Astrocyte of the cerebellum (primary cell): ENCODE measurements at regions of chr2 and their contacts with region 1.

Region 1: DNA sequence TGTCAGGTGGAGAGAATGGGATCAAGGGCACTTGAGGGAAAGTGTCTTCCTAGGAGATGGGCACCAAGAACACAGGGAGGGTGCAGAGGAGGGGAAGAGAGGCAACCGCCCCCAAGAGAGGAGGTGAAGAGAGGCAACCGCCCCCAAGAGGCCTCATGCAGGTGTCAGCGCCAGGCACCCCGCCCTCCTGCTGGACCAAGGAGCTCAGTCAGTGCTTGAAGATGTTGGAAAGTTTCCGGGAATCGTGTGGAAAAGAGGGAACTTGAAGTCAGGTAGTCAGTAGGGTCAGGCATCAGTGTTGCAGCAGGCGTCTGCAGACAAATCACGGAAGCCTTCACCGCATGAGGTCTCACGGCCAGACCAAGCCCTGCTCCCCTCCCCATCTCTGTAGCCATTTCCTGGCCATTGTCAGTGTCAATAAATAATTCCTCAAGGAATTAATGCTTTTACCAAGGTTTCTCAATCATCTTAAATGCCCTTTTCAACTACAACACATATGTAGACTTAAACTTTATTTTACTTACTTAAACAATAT is 353.1 kb downstream of the EIPR1 start:
- DNase-seq: no peak
- H3K4me3 ChIP-seq: no peak overlapping the region
- CTCF ChIP-seq: no peak

Region 2: GRCh38 chr2:2950403-2950952 is 74.0 kb before region 1 on chr2:
- in situ Hi-C with region 1: no loop called
- DNase-seq: no peak
- H3K4me3 ChIP-seq: no peak overlapping the region
- CTCF ChIP-seq: no peak

Region 3: DNA sequence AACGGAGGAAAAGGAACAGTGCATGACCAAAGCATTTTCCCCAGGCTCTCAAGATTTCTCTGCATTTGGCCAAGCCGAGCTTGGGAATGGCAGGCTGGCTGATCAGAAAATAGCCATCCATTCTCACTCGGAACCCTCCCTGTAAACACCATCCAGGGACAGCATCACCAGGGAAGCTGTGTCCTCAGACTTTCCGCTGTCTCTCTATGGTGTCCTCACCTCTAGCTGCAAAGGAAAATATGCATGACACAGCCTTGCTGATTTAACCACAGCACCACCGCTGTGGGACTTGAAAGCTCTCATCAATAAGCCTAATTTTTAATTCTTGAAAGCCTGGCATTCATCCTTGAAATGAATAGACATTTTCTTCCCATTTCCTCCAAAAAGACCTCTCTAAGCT is 41.5 kb after region 1 on chr2:
- in situ Hi-C with region 1: loop called (anchors 5 kb)
- DNase-seq: no peak
- H3K4me3 ChIP-seq: no peak overlapping the region
- CTCF ChIP-seq: no peak

Region 4: GRCh38 chr2:3204031-3204821 is 179.8 kb after region 1 on chr2:
- in situ Hi-C with region 1: no loop called
- DNase-seq: no peak
- H3K4me3 ChIP-seq: no peak overlapping the region
- CTCF ChIP-seq: no peak